Right lobe of liver (tissue), 6 donors: ENCODE measurements at regions of chr10 and their contacts with region 1.

Region 1: DNA sequence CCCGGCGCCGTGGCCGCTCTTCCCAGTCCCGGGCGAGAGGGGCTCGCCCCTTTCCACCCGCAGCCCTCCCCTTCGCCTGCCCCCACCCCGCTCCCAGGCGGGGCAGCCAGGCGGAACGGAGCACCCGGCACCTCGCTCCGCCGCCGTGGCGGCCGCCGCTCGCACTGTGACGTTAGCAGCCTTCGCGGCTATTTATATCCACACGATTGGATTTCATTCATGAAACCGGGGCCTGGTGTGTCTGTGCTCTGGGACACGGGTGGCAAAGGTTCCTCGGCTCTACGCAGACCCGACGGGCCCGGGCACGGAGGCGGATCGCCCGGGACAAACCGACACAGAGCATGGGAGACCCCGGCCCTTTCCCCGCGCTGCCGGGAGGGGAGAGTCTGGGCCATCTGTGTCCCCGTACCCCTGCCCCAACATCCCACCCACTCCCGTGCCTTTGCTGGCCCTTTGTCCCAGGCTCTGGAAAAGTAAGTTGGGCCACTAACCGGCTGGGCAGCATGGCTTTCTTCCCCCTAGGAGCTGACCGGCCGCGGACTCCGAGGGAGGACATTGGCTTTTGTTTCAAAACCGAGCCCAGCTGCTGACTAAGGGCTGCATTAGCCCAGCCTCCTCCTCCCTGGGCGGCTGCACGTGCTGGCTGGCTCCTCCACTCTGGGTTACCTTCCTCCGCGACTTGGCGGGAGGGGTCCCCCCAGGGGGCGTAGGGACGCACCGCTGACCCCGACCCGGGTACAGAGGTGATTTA is at the start of gene RHOBTB1:
- DNase-seq: peak; percentile 73 to 79 (median 74)
- ATAC-seq: peak; percentile 76 to 85 (median 82)
- H3K4me3 ChIP-seq: peak within 1 kb of the TSS; percentile 53 to 71 (median 63)
- H3K27ac ChIP-seq: peak within 1 kb of the TSS; percentile 81 to 98 (median 86)
- H3K4me1 ChIP-seq: peaks cover 0 to 11% (median 0%) of the 10 kb centered on the region in 4 donors
- H3K27me3 ChIP-seq: no peaks in the 10 kb centered on the region
- CTCF ChIP-seq: no peak
- POLR2A ChIP-seq: peak; percentile 72
- total RNA-seq, gene RHOBTB1: 3.0 to 5.4 (median 4.4) TPM

Region 2: DNA sequence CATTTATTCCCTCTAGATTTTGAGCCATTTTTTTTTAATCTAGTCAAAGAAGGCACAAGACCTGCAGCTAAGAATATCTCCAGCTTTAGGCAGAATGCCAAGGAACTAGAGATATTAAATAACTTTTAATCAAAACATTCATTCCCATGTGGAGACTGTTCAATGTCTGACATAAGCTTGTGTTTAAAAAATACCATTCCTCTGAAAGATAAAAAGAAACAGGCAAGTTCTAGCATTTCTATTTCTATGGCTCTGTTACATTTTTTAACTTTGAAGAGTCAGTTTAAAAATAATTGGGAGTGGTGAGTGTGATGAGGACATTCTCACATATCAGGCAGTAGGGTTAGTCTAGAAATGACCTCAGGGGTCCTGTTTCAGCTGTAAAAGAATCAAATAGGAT is 48.3 kb before region 1 on chr10:
- intact Hi-C with region 1: loop called in 1 of 2 experiments (anchors 10 kb)
- DNase-seq: no peak
- ATAC-seq: no peak
- H3K4me3 ChIP-seq: no peak overlapping the region
- H3K27ac ChIP-seq: no peak overlapping the region
- H3K4me1 ChIP-seq: no peaks in the 10 kb centered on the region
- H3K27me3 ChIP-seq: no peaks in the 10 kb centered on the region
- CTCF ChIP-seq: no peak
- POLR2A ChIP-seq: no peak